ENCODE measurements at regions of chr7 and their contacts with region 1.

Region 1: DNA sequence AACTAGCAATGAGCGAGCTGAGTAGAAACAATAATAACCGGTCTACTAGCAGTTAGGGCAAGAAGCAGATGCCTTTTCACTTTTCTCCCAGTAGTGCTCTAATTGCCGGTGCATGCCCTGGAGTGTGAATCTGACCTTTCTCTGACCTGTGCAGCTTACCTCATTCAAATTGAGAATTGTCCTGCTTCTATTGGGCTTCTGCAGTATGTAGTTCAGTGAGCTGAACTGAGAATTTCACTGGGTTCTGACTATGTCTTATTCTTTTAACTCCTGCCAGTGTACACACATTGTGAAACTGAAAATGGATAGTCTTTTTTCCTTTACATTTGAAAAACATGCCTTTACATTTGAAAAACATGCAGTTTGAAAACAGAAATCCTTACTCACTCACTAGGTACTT is 157.9 kb upstream of the GRM3 start:
- DNase-seq: no peak
- ATAC-seq: no peak
- H3K4me3 ChIP-seq: no peak overlapping the region
- H3K27ac ChIP-seq: no peak overlapping the region
- H3K4me1 ChIP-seq: no peaks in the 10 kb centered on the region
- H3K27me3 ChIP-seq: no peaks in the 10 kb centered on the region
- CTCF ChIP-seq: no peak

Region 2: DNA sequence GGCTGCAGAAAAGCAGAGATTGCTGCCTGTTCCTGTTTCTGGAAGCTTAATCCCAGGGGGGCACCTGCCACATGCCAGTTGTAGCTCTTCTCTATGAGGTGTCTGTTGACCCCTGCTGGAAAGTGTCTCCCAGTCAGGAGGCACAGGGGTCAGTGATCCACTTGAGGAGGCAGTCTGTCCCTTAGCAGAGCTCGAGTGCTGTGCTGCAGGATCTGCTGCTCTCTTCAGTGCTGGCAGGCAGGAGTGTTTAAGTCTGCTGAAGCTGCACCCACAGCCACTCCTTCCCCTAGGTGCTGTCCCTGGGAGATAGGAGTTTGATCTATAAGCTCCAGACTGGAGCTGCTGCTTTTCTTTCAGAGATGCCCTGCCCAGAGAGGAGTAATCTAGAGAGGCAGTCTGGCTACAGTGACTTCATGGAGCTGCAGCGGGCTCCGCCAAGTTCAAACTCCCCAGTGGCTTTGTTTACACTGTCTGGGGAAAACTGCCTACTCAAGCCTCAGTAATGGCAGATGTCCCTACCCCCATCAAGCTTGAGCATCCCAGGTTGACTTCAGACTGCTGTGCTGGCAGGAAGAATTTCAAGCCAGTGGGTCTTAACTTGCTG is 802.0 kb after region 1 on chr7:
- intact Hi-C with region 1: loop called in 1 of 10 experiments (anchors 5 kb)
- DNase-seq: no peak
- ATAC-seq: no peak
- H3K4me3 ChIP-seq: no peak overlapping the region
- H3K27ac ChIP-seq: no peak overlapping the region
- H3K4me1 ChIP-seq: no peaks in the 10 kb centered on the region
- H3K27me3 ChIP-seq: no peaks in the 10 kb centered on the region
- CTCF ChIP-seq: no peak

Measured in heart right ventricle (tissue), 16 donors.